CD4-positive, alpha-beta memory T cell (primary cell): ENCODE measurements at regions of chr12 and their contacts with region 1.

Region 1: GRCh38 chr12:132523576-132524331 is 33.8 kb downstream of the FBRSL1 start:
- DNase-seq: peak; percentile 59 to 69 (median 63)
- H3K4me3 ChIP-seq: no peak overlapping the region
- H3K4me3 Mint-ChIP-seq: no peak overlapping the region
- H3K27ac ChIP-seq: no peak overlapping the region
- H3K27ac Mint-ChIP-seq: peak overlapping the region in 2 of 7 donors; percentile 55 to 68
- H3K4me1 ChIP-seq: peaks cover 8% of the 10 kb centered on the region
- H3K4me1 Mint-ChIP-seq: peaks cover 9 to 21% (median 12%) of the 10 kb centered on the region in 4 donors
- H3K27me3 ChIP-seq: no peaks in the 10 kb centered on the region
- H3K27me3 Mint-ChIP-seq: no peaks in the 10 kb centered on the region

Region 2: GRCh38 chr12:131266591-131267467 is 1256.9 kb before region 1 on chr12:
- CTCF ChIA-PET with region 1: no interaction called
- POLR2A ChIA-PET with region 1: no interaction called
- intact Hi-C with region 1: no loop called
- DNase-seq: no peak
- H3K4me3 ChIP-seq: no peak overlapping the region
- H3K4me3 Mint-ChIP-seq: no peak overlapping the region
- H3K27ac ChIP-seq: no peak overlapping the region
- H3K27ac Mint-ChIP-seq: no peak overlapping the region
- H3K4me1 ChIP-seq: no peaks in the 10 kb centered on the region
- H3K4me1 Mint-ChIP-seq: no peaks in the 10 kb centered on the region
- H3K27me3 ChIP-seq: no peaks in the 10 kb centered on the region
- H3K27me3 Mint-ChIP-seq: no peaks in the 10 kb centered on the region

Region 3: DNA sequence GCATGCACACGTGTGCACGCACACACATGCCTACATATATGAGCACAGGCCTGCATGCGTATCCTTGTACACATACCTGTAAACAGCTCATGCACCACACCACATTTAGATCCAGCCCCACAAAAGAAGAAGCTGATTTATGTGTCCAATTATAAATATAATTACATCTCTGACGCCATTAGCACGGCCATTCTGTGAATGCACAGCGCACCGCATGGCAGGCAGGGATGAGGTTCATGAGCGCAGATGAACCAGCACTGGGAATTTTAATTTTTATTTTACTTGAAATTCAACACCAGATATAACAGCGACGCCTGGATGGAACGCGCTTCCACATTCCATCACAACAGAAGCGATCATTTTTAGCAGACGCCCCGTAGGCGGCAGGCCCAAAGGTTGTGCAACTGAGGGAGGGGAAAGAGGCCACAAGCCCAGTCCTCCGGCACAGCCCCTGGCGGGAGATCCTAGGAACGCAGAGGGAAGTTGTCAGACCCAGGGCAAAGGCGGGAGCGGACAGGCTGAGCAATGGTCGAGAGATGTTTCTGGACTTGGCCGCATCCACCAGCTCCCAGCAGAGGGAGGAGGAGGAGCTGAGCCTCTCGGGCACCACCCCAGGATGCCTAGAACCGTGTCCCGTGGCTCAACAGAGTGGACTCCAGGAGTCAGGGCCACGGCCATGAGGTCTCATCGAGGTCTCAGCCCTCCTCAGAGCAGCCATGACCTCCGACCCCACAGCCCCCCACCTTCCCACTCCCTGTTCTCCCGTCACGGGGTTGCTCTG is 156.5 kb before region 1 on chr12:
- CTCF ChIA-PET with region 1: no interaction called
- POLR2A ChIA-PET with region 1: no interaction called
- intact Hi-C with region 1: no loop called
- DNase-seq: no peak
- H3K4me3 ChIP-seq: no peak overlapping the region
- H3K4me3 Mint-ChIP-seq: no peak overlapping the region
- H3K27ac ChIP-seq: no peak overlapping the region
- H3K27ac Mint-ChIP-seq: no peak overlapping the region
- H3K4me1 ChIP-seq: no peaks in the 10 kb centered on the region
- H3K4me1 Mint-ChIP-seq: peaks cover 0 to 3% (median 0%) of the 10 kb centered on the region in 4 donors
- H3K27me3 ChIP-seq: no peaks in the 10 kb centered on the region
- H3K27me3 Mint-ChIP-seq: peaks cover 21 to 26% of the 10 kb centered on the region in 2 donors

Region 4: GRCh38 chr12:132429946-132430643 is 93.7 kb before region 1 on chr12:
- CTCF ChIA-PET with region 1: interaction called, 11 read pairs
- POLR2A ChIA-PET with region 1: interaction called, 3 read pairs
- intact Hi-C with region 1: loop called (anchors 1 kb)
- DNase-seq: peak; percentile 61 to 76 (median 72)
- H3K4me3 ChIP-seq: peak overlapping the region in 1 of 2 donors; percentile 23
- H3K4me3 Mint-ChIP-seq: peak overlapping the region; percentile 36 to 86 (median 71)
- H3K27ac ChIP-seq: no peak overlapping the region
- H3K27ac Mint-ChIP-seq: peak overlapping the region in 6 of 7 donors; percentile 32 to 75 (median 66)
- H3K4me1 ChIP-seq: peaks cover 36% of the 10 kb centered on the region
- H3K4me1 Mint-ChIP-seq: peaks cover 17 to 45% (median 24%) of the 10 kb centered on the region in 4 donors
- H3K27me3 ChIP-seq: no peaks in the 10 kb centered on the region
- H3K27me3 Mint-ChIP-seq: no peaks in the 10 kb centered on the region

Region 5: GRCh38 chr12:132460571-132460970 is 63.2 kb before region 1 on chr12:
- CTCF ChIA-PET with region 1: interaction called, 9 read pairs
- POLR2A ChIA-PET with region 1: no interaction called
- intact Hi-C with region 1: loop called (anchors 1 kb)
- DNase-seq: no peak
- H3K4me3 ChIP-seq: no peak overlapping the region
- H3K4me3 Mint-ChIP-seq: no peak overlapping the region
- H3K27ac ChIP-seq: no peak overlapping the region
- H3K27ac Mint-ChIP-seq: no peak overlapping the region
- H3K4me1 ChIP-seq: peaks cover 9% of the 10 kb centered on the region
- H3K4me1 Mint-ChIP-seq: peaks cover 3 to 5% (median 4%) of the 10 kb centered on the region in 4 donors
- H3K27me3 ChIP-seq: no peaks in the 10 kb centered on the region
- H3K27me3 Mint-ChIP-seq: no peaks in the 10 kb centered on the region